ENCODE measurements at regions of chrX and their contacts with region 1.

Region 1: DNA sequence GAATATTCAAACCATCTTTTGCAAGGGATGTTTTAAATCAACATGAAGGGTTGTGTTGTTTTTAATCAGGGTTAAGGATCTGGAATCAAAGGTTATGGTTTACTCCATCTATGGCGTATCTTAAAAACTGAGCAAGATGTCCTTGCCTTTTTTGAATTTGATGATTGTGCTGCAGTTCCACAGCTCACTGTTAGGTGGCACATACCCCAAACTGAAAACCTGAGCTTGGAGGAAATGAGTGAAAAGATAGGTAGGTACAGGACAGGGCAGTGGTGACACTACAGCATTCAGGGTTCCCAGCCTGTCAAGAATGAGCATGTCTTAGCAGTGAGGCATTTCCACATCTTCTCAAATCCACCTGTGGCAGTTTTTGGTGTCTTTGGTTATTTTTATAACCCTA is 13.1 kb upstream of the EOLA1 start:
- DNase-seq: no peak
- H3K4me3 Mint-ChIP-seq: no peak overlapping the region
- H3K27ac Mint-ChIP-seq: peak overlapping the region; percentile 74
- H3K4me1 Mint-ChIP-seq: peaks cover 19% of the 10 kb centered on the region
- H3K27me3 Mint-ChIP-seq: no peaks in the 10 kb centered on the region

Region 2: GRCh38 chrX:149512225-149512885 is 15.3 kb before region 1 on chrX:
- intact Hi-C with region 1: loop called (anchors 1 kb)
- DNase-seq: peak; percentile 25
- H3K4me3 Mint-ChIP-seq: no peak overlapping the region
- H3K27ac Mint-ChIP-seq: peak overlapping the region; percentile 75
- H3K4me1 Mint-ChIP-seq: peaks cover 45% of the 10 kb centered on the region
- H3K27me3 Mint-ChIP-seq: no peaks in the 10 kb centered on the region

Region 3: GRCh38 chrX:149631234-149632165 is 103.8 kb after region 1 on chrX and contains the start of gene TMEM185A:
- intact Hi-C with region 1: loop called (anchors 2 kb)
- DNase-seq: peak; percentile 73
- H3K4me3 Mint-ChIP-seq: peak within 1 kb of the TSS; percentile 95
- H3K27ac Mint-ChIP-seq: peak within 1 kb of the TSS; percentile 85
- H3K4me1 Mint-ChIP-seq: peaks cover 43% of the 10 kb centered on the region
- H3K27me3 Mint-ChIP-seq: peaks cover 1% of the 10 kb centered on the region
- total RNA-seq, gene TMEM185A: 18.7 and 25.5 TPM in 2 replicates

Region 4: GRCh38 chrX:149830192-149830873 is 302.6 kb after region 1 on chrX:
- intact Hi-C with region 1: loop called (anchors 5 kb)
- DNase-seq: peak; percentile 14
- H3K4me3 Mint-ChIP-seq: peak overlapping the region; percentile 78
- H3K27ac Mint-ChIP-seq: peak overlapping the region; percentile 97
- H3K4me1 Mint-ChIP-seq: peaks cover 61% of the 10 kb centered on the region
- H3K27me3 Mint-ChIP-seq: peaks cover 4% of the 10 kb centered on the region

Region 5: GRCh38 chrX:150219374-150220185 is 691.9 kb after region 1 on chrX:
- intact Hi-C with region 1: no loop called
- DNase-seq: no peak
- H3K4me3 Mint-ChIP-seq: no peak overlapping the region
- H3K27ac Mint-ChIP-seq: no peak overlapping the region
- H3K4me1 Mint-ChIP-seq: no peaks in the 10 kb centered on the region
- H3K27me3 Mint-ChIP-seq: no peaks in the 10 kb centered on the region

Measured in activated T-helper 1 cell treated with anti-CD3 and anti-CD28 coated beads, Interleukin-12 subunit alpha, Interleukin-12 subunit beta, Interleukin-2, Interleukin-4 antibody, amounts not matched to agents 30 ng/mL and 10 ng/mL and 1 ng/mL, durations not matched to agents 14 hours and 24 hours and 36 hours (primary cell).